Posterior vena cava (tissue), 2 donors: ENCODE measurements at regions of chr18 and their contacts with region 1.

Region 1: DNA sequence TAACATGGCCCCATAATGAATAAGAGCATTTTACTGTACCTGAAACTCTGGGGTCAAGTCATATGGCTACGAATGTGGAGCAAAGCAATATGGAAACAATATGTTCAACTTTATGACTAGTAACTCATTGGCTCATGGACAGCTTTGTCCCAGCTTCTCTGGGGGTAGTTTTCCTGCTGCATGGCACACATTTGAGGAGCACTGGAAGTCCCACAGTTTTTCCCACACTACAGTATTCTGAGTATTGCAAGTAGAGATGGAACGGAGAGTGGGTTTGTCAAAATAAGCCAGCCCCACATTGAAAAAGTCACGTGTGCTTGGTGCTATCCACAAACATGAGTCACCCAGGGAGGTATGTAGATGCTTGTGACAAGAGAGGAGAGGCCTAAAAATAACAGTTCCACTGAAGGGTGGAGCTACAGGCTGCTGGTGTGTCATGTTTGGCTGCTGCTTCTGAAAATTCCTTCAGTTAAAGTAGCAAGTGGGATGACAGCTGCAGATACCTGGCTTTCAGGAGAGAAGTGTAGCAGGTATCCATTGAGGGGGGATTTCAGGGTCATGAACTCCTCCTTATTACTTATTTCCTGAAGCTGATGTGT is 48.2 kb upstream of the CTAGE1 start:
- DNase-seq: no peak

Region 2: GRCh38 chr18:22563098-22563707 is 97.2 kb after region 1 on chr18:
- intact Hi-C with region 1: loop called in 1 of 2 experiments (anchors 5 kb)
- DNase-seq: no peak